GM13976 (cell line): ENCODE measurements at regions of chr18 and their contacts with region 1.

Region 1: GRCh38 chr18:58768293-58768974 is 96.2 kb upstream of the ZNF532 start:
- DNase-seq: peak; percentile 90
- CTCF ChIP-seq: peak; percentile 85

Region 2: GRCh38 chr18:58180738-58181353 is 587.6 kb before region 1 on chr18:
- in situ Hi-C with region 1: loop called (anchors 25 kb)
- DNase-seq: peak; percentile 82
- CTCF ChIP-seq: peak; percentile 72

Region 3: DNA sequence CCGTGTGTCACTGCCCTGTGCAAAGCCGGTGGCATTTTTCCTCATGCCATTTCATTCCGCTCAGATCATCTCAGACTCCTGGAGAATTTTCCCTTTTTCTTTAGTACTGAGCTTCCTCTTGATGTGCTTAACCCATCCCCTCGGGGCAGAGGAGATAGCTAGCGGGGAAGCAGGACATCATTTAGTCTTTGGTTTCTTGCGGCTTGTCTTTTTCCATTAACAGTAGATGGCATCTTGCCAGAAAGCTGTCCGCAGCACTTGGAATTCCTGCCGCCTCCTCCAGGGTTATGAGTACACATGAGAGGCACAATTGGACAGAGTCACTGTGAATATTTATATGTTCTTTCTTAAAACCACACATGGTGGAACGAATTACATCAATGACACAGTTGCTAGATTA is 366.2 kb before region 1 on chr18:
- in situ Hi-C with region 1: loop called (anchors 10 kb)
- DNase-seq: no peak
- CTCF ChIP-seq: no peak